ENCODE measurements at regions of chr4 and their contacts with region 1.

Region 1: GRCh38 chr4:99462875-99463464 is 27.8 kb upstream of the ADH7 start:
- DNase-seq: peak; percentile 54
- H3K4me3 ChIP-seq: peak overlapping the region in 1 of 2 experiments; percentile 24; a peak in 1 of 4 replicates
- H3K27ac ChIP-seq: no peak overlapping the region
- H3K4me1 ChIP-seq: no peaks in the 10 kb centered on the region; a peak in 1 of 4 replicates
- H3K27me3 ChIP-seq: no peaks in the 10 kb centered on the region; the same call in 1 of the 2 replicates
- CTCF ChIP-seq: peak; percentile 86
- EP300 ChIP-seq: no peak
- RAD21 ChIP-seq: peak; percentile 94

Region 2: GRCh38 chr4:99117876-99118693 is 344.9 kb before region 1 on chr4:
- CTCF ChIA-PET with region 1: interaction called, 12 read pairs
- POLR2A ChIA-PET with region 1: no interaction called
- DNase-seq: peak; percentile 23
- H3K4me3 ChIP-seq: no peak overlapping the region
- H3K27ac ChIP-seq: no peak overlapping the region
- H3K4me1 ChIP-seq: no peaks in the 10 kb centered on the region
- H3K27me3 ChIP-seq: no peaks in the 10 kb centered on the region
- CTCF ChIP-seq: peak; percentile 64
- EP300 ChIP-seq: no peak
- RAD21 ChIP-seq: peak; percentile 70

Region 3: GRCh38 chr4:99414389-99414788 is 48.6 kb before region 1 on chr4:
- CTCF ChIA-PET with region 1: interaction called, 18 read pairs
- POLR2A ChIA-PET with region 1: no interaction called
- DNase-seq: no peak
- H3K4me3 ChIP-seq: no peak overlapping the region
- H3K27ac ChIP-seq: no peak overlapping the region
- H3K4me1 ChIP-seq: no peaks in the 10 kb centered on the region
- H3K27me3 ChIP-seq: no peaks in the 10 kb centered on the region
- CTCF ChIP-seq: no peak
- EP300 ChIP-seq: no peak
- RAD21 ChIP-seq: no peak

Region 4: DNA sequence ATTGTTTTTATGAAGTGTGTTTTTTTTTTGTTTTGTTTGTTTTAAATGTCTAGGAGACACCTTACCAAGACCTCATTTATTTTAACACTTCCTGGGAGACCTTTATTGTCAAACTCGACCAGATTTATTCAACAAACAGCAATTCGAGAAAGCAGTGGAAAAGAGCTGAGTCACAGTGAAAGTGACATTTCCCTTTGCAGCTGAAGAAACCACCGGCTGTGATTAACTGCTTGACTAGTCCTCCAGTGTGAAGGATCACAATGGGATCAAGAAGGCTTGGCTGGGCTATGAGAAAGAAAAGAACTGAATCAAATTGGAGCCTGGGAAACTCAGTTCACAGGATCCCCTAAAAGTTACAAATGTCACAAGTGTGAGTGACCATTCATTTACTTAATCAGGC is 15.9 kb before region 1 on chr4:
- CTCF ChIA-PET with region 1: interaction called, 40 read pairs
- POLR2A ChIA-PET with region 1: no interaction called
- DNase-seq: no peak
- H3K4me3 ChIP-seq: no peak overlapping the region
- H3K27ac ChIP-seq: no peak overlapping the region
- H3K4me1 ChIP-seq: no peaks in the 10 kb centered on the region
- H3K27me3 ChIP-seq: no peaks in the 10 kb centered on the region
- CTCF ChIP-seq: no peak
- EP300 ChIP-seq: no peak
- RAD21 ChIP-seq: no peak

Region 5: GRCh38 chr4:99808260-99808857 is 345.4 kb after region 1 on chr4:
- CTCF ChIA-PET with region 1: interaction called, 18 read pairs
- POLR2A ChIA-PET with region 1: no interaction called
- DNase-seq: peak; percentile 57
- H3K4me3 ChIP-seq: no peak overlapping the region
- H3K27ac ChIP-seq: no peak overlapping the region
- H3K4me1 ChIP-seq: no peaks in the 10 kb centered on the region
- H3K27me3 ChIP-seq: peaks cover 14% of the 10 kb centered on the region; the same call in 1 of the 2 replicates
- CTCF ChIP-seq: peak; percentile 71
- EP300 ChIP-seq: no peak
- RAD21 ChIP-seq: peak; percentile 81

Measured in SK-N-SH (cell line).